ENCODE measurements at regions of chr14 and their contacts with region 1.

Region 1: DNA sequence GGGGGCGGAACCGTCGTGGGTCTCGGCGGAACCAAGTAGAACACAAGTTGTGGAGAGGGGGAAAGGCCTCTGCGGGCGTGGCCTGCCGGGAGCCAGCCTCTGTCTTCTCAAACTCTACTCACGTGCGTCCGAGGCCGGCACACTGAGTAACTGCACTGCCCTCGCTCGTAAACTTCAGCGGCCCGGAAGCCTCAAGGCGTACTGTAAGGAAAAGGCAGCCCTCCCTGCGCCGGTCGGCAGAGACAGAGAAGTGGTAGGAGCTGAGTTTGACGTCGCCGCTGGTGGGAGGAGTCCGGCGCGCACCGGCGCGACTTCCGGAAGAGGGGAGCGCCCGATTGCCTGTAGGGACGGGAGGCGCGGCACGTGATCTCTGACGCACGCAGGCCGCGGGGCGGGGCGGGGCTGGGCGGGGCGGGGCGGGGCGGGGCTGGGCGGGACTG is at the start of gene FBXO33:
- DNase-seq: peak; percentile 96 to 97
- H3K4me3 ChIP-seq: peak within 1 kb of the TSS; percentile 93
- H3K4me3 Mint-ChIP-seq: peak within 1 kb of the TSS; percentile 93
- H3K27ac Mint-ChIP-seq: peak within 1 kb of the TSS; percentile 100
- H3K4me1 ChIP-seq: peaks cover 12% of the 10 kb centered on the region
- H3K4me1 Mint-ChIP-seq: peaks cover 19% of the 10 kb centered on the region
- H3K27me3 ChIP-seq: no peaks in the 10 kb centered on the region
- H3K27me3 Mint-ChIP-seq: no peaks in the 10 kb centered on the region
- CTCF ChIP-seq: no peak
- total RNA-seq, gene FBXO33: 6.0 and 6.5 TPM in 2 replicates

Region 2: GRCh38 chr14:39393274-39393673 is 38.9 kb before region 1 on chr14:
- CTCF ChIA-PET with region 1: no interaction called
- POLR2A ChIA-PET with region 1: no interaction called
- intact Hi-C with region 1: loop called (anchors 1 kb)
- DNase-seq: peak in 1 of 2 experiments; percentile 11
- H3K4me3 ChIP-seq: no peak overlapping the region
- H3K4me3 Mint-ChIP-seq: no peak overlapping the region
- H3K27ac Mint-ChIP-seq: no peak overlapping the region
- H3K4me1 ChIP-seq: peaks cover 6% of the 10 kb centered on the region; the same call in 1 of the 2 replicates
- H3K4me1 Mint-ChIP-seq: no peaks in the 10 kb centered on the region
- H3K27me3 ChIP-seq: no peaks in the 10 kb centered on the region
- H3K27me3 Mint-ChIP-seq: no peaks in the 10 kb centered on the region
- CTCF ChIP-seq: no peak

Measured in Caco-2 (cell line).